ENCODE measurements at regions of chr1 and their contacts with region 1.

Region 1: DNA sequence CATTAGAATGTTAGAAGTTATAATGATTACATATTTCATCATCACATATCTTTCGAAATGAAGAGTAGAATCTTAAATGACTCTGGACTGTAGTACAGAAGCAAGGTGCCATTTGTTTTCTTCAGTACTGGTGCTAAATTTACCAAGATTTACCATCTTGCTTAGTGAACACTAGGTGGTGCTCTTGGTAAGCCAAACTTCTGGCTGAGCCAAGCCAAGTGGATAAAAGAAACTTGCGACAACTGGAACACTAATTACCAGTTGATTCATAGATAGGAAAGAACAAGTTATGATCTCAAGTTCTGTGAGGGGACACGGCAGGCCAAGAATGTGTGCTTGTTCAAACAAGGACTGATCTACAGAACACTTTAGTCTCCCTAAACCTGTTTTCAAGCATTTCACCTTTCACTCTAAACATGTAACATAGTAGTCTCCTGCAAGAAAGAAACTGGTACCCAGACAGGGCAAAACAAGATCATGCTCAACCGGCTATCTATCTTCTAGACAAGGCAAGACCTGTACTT is 19.8 kb downstream of the SPRTN start:
- DNase-seq: peak in 7 of 14 experiments; percentile 19 to 76 (median 47)
- ATAC-seq: peak; percentile 91
- H3K4me3 ChIP-seq: no peak overlapping the region
- H3K4me3 Mint-ChIP-seq: no peak overlapping the region
- H3K27ac ChIP-seq: no peak overlapping the region
- H3K27ac Mint-ChIP-seq: peak overlapping the region; percentile 51
- H3K4me1 ChIP-seq: no peaks in the 10 kb centered on the region
- H3K4me1 Mint-ChIP-seq: peaks cover 7% of the 10 kb centered on the region
- H3K27me3 ChIP-seq: no peaks in the 10 kb centered on the region
- H3K27me3 Mint-ChIP-seq: no peaks in the 10 kb centered on the region
- CTCF ChIP-seq: peak; percentile 88

Region 2: GRCh38 chr1:231124746-231125145 is 233.1 kb before region 1 on chr1:
- CTCF ChIA-PET with region 1: no interaction called
- POLR2A ChIA-PET with region 1: no interaction called
- intact Hi-C with region 1: no loop called
- DNase-seq: no peak
- ATAC-seq: no peak
- H3K4me3 ChIP-seq: no peak overlapping the region
- H3K4me3 Mint-ChIP-seq: no peak overlapping the region
- H3K27ac ChIP-seq: no peak overlapping the region
- H3K27ac Mint-ChIP-seq: no peak overlapping the region
- H3K4me1 ChIP-seq: no peaks in the 10 kb centered on the region
- H3K4me1 Mint-ChIP-seq: no peaks in the 10 kb centered on the region
- H3K27me3 ChIP-seq: no peaks in the 10 kb centered on the region
- H3K27me3 Mint-ChIP-seq: peaks cover 6% of the 10 kb centered on the region
- CTCF ChIP-seq: no peak

Region 3: DNA sequence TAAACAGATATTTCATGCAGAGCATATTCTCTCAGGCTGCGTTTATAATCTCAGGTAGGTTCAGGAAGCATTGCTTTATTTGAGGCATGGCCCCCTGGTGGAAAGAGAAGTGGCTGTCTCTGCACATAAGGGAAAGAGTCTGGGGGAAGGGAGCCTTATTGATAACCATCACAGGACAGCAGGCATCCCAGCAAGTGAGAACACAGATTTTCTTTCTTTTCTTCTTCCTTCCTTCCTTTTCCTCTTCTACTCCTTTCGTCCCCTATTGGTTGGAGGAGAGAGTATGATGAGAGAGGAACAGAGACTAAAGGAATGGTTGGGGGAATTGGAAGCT is 192.5 kb after region 1 on chr1:
- CTCF ChIA-PET with region 1: interaction called, 3 read pairs
- POLR2A ChIA-PET with region 1: no interaction called
- intact Hi-C with region 1: loop called (anchors 1 to 5 kb)
- DNase-seq: peak in 7 of 14 experiments; percentile 3 to 62 (median 27)
- ATAC-seq: peak; percentile 71
- H3K4me3 ChIP-seq: no peak overlapping the region
- H3K4me3 Mint-ChIP-seq: no peak overlapping the region
- H3K27ac ChIP-seq: no peak overlapping the region
- H3K27ac Mint-ChIP-seq: no peak overlapping the region
- H3K4me1 ChIP-seq: no peaks in the 10 kb centered on the region
- H3K4me1 Mint-ChIP-seq: peaks cover 36% of the 10 kb centered on the region
- H3K27me3 ChIP-seq: no peaks in the 10 kb centered on the region
- H3K27me3 Mint-ChIP-seq: no peaks in the 10 kb centered on the region
- CTCF ChIP-seq: peak; percentile 53

Region 4: GRCh38 chr1:231590453-231591198 is 232.7 kb after region 1 on chr1:
- CTCF ChIA-PET with region 1: interaction called, 4 read pairs
- POLR2A ChIA-PET with region 1: no interaction called
- intact Hi-C with region 1: loop called (anchors 1 kb)
- DNase-seq: peak in 10 of 14 experiments; percentile 4 to 67 (median 26)
- ATAC-seq: peak; percentile 61
- H3K4me3 ChIP-seq: no peak overlapping the region
- H3K4me3 Mint-ChIP-seq: no peak overlapping the region
- H3K27ac ChIP-seq: no peak overlapping the region
- H3K27ac Mint-ChIP-seq: no peak overlapping the region
- H3K4me1 ChIP-seq: no peaks in the 10 kb centered on the region
- H3K4me1 Mint-ChIP-seq: no peaks in the 10 kb centered on the region
- H3K27me3 ChIP-seq: no peaks in the 10 kb centered on the region
- H3K27me3 Mint-ChIP-seq: no peaks in the 10 kb centered on the region
- CTCF ChIP-seq: peak; percentile 55

Region 5: GRCh38 chr1:231603598-231604275 is 245.8 kb after region 1 on chr1:
- CTCF ChIA-PET with region 1: interaction called, 4 read pairs
- POLR2A ChIA-PET with region 1: interaction called, 4 read pairs
- intact Hi-C with region 1: loop called (anchors 1 kb)
- DNase-seq: peak in 10 of 14 experiments; percentile 3 to 75 (median 34)
- ATAC-seq: peak; percentile 93
- H3K4me3 ChIP-seq: peak overlapping the region; percentile 57
- H3K4me3 Mint-ChIP-seq: peak overlapping the region; percentile 91
- H3K27ac ChIP-seq: peak overlapping the region in 1 of 2 donors; percentile 2
- H3K27ac Mint-ChIP-seq: peak overlapping the region; percentile 68
- H3K4me1 ChIP-seq: peaks cover 4% of the 10 kb centered on the region
- H3K4me1 Mint-ChIP-seq: peaks cover 10% of the 10 kb centered on the region
- H3K27me3 ChIP-seq: no peaks in the 10 kb centered on the region
- H3K27me3 Mint-ChIP-seq: no peaks in the 10 kb centered on the region
- CTCF ChIP-seq: peak; percentile 84